CD4-positive, alpha-beta T cell (primary cell): ENCODE measurements at regions of chr15 and their contacts with region 1.

Region 1: DNA sequence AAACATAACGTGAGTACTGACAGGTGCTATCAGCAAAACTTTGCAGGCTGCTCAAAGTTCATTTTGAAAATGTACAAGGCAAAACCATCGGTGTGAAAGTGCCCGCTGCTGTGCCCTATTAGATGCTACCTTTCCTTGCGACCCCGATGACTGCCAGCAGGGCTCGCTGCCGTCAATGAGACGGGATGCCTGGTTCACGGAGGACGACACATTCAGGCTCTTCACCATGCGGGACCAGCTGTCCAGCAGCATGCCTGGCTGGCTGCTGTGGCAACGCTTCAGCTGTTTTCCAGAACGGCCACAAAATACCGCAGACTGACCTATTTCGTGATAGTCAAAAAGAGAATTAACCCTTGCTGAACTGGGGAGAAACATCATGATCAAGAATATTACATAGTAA is 92.7 kb upstream of the OCA2 start:
- DNase-seq: no peak
- ATAC-seq: no peak
- H3K4me3 ChIP-seq: no peak overlapping the region
- H3K4me3 Mint-ChIP-seq: no peak overlapping the region
- H3K27ac ChIP-seq: no peak overlapping the region
- H3K27ac Mint-ChIP-seq: no peak overlapping the region
- H3K4me1 ChIP-seq: no peaks in the 10 kb centered on the region
- H3K4me1 Mint-ChIP-seq: no peaks in the 10 kb centered on the region
- H3K27me3 ChIP-seq: no peaks in the 10 kb centered on the region
- H3K27me3 Mint-ChIP-seq: no peaks in the 10 kb centered on the region
- CTCF ChIP-seq: no peak

Region 2: GRCh38 chr15:28208583-28208982 is 16.8 kb after region 1 on chr15:
- CTCF ChIA-PET with region 1: no interaction called
- POLR2A ChIA-PET with region 1: no interaction called
- intact Hi-C with region 1: no loop called
- DNase-seq: no peak
- ATAC-seq: no peak
- H3K4me3 ChIP-seq: no peak overlapping the region
- H3K4me3 Mint-ChIP-seq: no peak overlapping the region
- H3K27ac ChIP-seq: no peak overlapping the region
- H3K27ac Mint-ChIP-seq: no peak overlapping the region
- H3K4me1 ChIP-seq: peaks cover 3% of the 10 kb centered on the region
- H3K4me1 Mint-ChIP-seq: no peaks in the 10 kb centered on the region
- H3K27me3 ChIP-seq: no peaks in the 10 kb centered on the region
- H3K27me3 Mint-ChIP-seq: no peaks in the 10 kb centered on the region
- CTCF ChIP-seq: no peak

Region 3: GRCh38 chr15:28246605-28247004 is 54.8 kb after region 1 on chr15:
- CTCF ChIA-PET with region 1: no interaction called
- POLR2A ChIA-PET with region 1: no interaction called
- intact Hi-C with region 1: loop called in 1 of 2 experiments (anchors 10 kb)
- DNase-seq: no peak
- ATAC-seq: no peak
- H3K4me3 ChIP-seq: no peak overlapping the region
- H3K4me3 Mint-ChIP-seq: no peak overlapping the region
- H3K27ac ChIP-seq: no peak overlapping the region
- H3K27ac Mint-ChIP-seq: no peak overlapping the region
- H3K4me1 ChIP-seq: no peaks in the 10 kb centered on the region
- H3K4me1 Mint-ChIP-seq: no peaks in the 10 kb centered on the region
- H3K27me3 ChIP-seq: no peaks in the 10 kb centered on the region
- H3K27me3 Mint-ChIP-seq: no peaks in the 10 kb centered on the region
- CTCF ChIP-seq: no peak